Naive thymus-derived CD4-positive, alpha-beta T cell (primary cell): ENCODE measurements at regions of chr7 and their contacts with region 1.

Region 1: GRCh38 chr7:5636914-5637313 is 144.5 kb downstream of the RNF216 start:
- DNase-seq: no peak
- ATAC-seq: no peak
- H3K4me3 ChIP-seq: no peak overlapping the region
- H3K4me3 Mint-ChIP-seq: no peak overlapping the region
- H3K27ac ChIP-seq: no peak overlapping the region
- H3K27ac Mint-ChIP-seq: peak overlapping the region in 5 of 9 donors; percentile 19 to 86 (median 54)
- H3K4me1 ChIP-seq: peaks cover 5 to 13% of the 10 kb centered on the region in 2 donors
- H3K4me1 Mint-ChIP-seq: peaks cover 11 to 45% (median 35%) of the 10 kb centered on the region in 7 donors
- H3K27me3 ChIP-seq: no peaks in the 10 kb centered on the region
- H3K27me3 Mint-ChIP-seq: no peaks in the 10 kb centered on the region

Region 2: DNA sequence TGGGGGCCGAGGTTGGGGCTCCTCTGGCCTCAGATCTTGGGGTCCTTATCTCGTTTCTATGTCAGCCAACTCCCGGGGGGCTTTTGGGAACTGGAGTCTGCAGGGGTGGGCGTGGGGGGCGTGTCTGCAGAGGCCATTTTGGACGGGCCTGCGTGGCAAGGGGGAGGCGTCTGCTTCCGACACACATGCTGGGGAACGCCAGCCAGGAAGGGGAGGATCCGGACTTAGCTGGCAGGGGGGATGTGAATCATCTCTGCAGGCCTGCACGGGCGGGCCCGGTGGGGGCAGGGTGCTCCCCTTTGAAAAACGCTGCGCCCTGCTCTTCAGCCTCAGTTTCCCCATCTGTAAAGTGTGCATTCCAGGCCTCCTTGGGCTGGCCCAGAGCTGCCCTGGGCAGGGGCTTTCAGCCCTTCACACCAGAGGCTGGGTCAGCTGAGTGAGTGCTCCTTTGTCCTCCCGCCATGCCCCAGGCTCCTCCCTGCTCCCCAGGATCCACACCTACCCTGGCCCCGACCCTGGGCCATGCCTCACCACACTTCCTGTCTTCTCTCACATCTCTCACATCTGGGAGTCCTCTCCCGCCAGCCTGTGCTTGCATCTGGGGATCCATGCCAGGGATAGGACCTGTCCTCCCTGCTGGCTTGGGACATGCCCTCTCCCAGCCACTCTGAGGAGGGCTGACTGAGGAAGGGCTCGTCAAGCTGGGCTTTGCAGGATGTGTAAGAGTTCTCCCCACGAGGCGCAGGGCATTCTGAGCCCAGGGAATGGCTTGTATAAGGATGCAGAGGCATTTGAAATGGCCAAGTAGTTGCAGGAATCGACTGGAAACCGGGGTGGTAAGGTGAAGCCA is 40.6 kb before region 1 on chr7:
- CTCF ChIA-PET with region 1: no interaction called
- POLR2A ChIA-PET with region 1: no interaction called
- intact Hi-C with region 1: loop called in 1 of 2 experiments (anchors 2 kb)
- DNase-seq: peak in 5 of 9 donors; percentile 16 to 76 (median 33)
- ATAC-seq: peak; percentile 58
- H3K4me3 ChIP-seq: peak overlapping the region; percentile 25
- H3K4me3 Mint-ChIP-seq: peak overlapping the region in 9 of 10 donors; percentile 63 to 86 (median 77)
- H3K27ac ChIP-seq: no peak overlapping the region
- H3K27ac Mint-ChIP-seq: peak overlapping the region in 2 of 9 donors; percentile 43 to 88
- H3K4me1 ChIP-seq: peaks cover 14 to 31% of the 10 kb centered on the region in 2 donors
- H3K4me1 Mint-ChIP-seq: peaks cover 15 to 25% (median 20%) of the 10 kb centered on the region in 7 donors
- H3K27me3 ChIP-seq: peaks cover 0 to 12% of the 10 kb centered on the region in 2 donors
- H3K27me3 Mint-ChIP-seq: peaks cover 16 to 25% (median 21%) of the 10 kb centered on the region in 5 donors